IMR-90 (cell line): ENCODE measurements at regions of chr4 and their contacts with region 1.

Region 1: DNA sequence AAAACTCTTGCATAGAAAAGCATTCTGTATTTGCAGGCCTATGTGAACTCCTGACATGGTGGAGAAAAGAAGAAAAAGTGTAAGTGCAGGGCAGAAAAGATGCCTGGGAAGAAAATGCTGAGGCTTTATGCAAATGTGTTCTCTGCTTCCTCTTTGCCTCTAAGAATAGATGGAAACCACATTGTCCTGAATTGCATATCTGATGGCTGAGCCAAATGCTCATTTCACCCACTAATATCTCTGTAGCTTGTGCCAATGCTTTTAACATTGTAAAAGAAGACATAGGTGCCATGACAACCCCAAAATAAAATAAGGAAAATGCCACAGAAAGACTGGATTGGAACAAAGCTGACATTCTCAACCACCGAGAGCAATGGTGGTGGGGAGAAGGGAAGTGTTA is 307.4 kb downstream of the GRIA2 start:
- DNase-seq: no peak
- ATAC-seq: no peak
- H3K4me3 ChIP-seq: no peak overlapping the region
- H3K27ac ChIP-seq: no peak overlapping the region
- H3K4me1 ChIP-seq: no peaks in the 10 kb centered on the region
- H3K27me3 ChIP-seq: no peaks in the 10 kb centered on the region
- CTCF ChIP-seq: no peak
- POLR2A ChIP-seq: no peak
- RAD21 ChIP-seq: no peak

Region 2: GRCh38 chr4:157655096-157655809 is 127.3 kb after region 1 on chr4:
- CTCF ChIA-PET with region 1: no interaction called
- POLR2A ChIA-PET with region 1: no interaction called
- dilution Hi-C with region 1: no loop called
- in situ Hi-C with region 1: no loop called
- intact Hi-C with region 1: no loop called
- DNase-seq: no peak
- ATAC-seq: no peak
- H3K4me3 ChIP-seq: no peak overlapping the region
- H3K27ac ChIP-seq: no peak overlapping the region
- H3K4me1 ChIP-seq: no peaks in the 10 kb centered on the region
- H3K27me3 ChIP-seq: no peaks in the 10 kb centered on the region
- CTCF ChIP-seq: no peak
- POLR2A ChIP-seq: no peak
- RAD21 ChIP-seq: no peak

Region 3: DNA sequence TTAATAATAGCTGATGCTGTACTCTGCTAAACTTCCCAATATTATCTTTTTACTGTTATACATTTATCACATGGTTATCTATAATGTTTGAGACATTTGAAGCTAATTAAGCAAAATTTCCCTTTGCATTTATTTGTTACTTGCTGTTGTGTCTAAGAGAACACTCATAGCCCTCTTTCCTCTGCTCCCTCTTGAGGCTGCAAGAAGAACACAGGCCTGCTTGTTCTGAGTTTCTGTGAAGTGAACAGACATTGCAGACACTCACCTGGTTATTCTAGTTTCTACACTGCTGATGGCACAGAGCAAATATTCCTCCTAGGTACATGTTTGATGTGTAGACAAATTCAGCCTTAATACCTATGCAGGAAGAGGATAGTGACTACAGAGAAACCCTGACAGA is 277.0 kb after region 1 on chr4:
- CTCF ChIA-PET with region 1: no interaction called
- POLR2A ChIA-PET with region 1: no interaction called
- dilution Hi-C with region 1: no loop called
- in situ Hi-C with region 1: no loop called
- intact Hi-C with region 1: loop called (anchors 5 kb)
- DNase-seq: no peak
- ATAC-seq: no peak
- H3K4me3 ChIP-seq: no peak overlapping the region
- H3K27ac ChIP-seq: no peak overlapping the region
- H3K4me1 ChIP-seq: no peaks in the 10 kb centered on the region
- H3K27me3 ChIP-seq: no peaks in the 10 kb centered on the region
- CTCF ChIP-seq: no peak
- POLR2A ChIP-seq: no peak
- RAD21 ChIP-seq: no peak